Activated B cell treated with CpG ODN at 0.5 μM for 24 hours (primary cell): ENCODE measurements at regions of chr12 and their contacts with region 1.

Region 1: GRCh38 chr12:48995061-48995879 is 3.9 kb downstream of the DDN start:
- DNase-seq: no peak
- ATAC-seq: peak; percentile 23
- H3K4me3 Mint-ChIP-seq: peak overlapping the region; percentile 67
- H3K27ac Mint-ChIP-seq: no peak overlapping the region
- H3K4me1 Mint-ChIP-seq: peaks cover 38% of the 10 kb centered on the region
- H3K27me3 Mint-ChIP-seq: peaks cover 28% of the 10 kb centered on the region
- CTCF ChIP-seq: no peak

Region 2: GRCh38 chr12:48851883-48852733 is 143.2 kb before region 1 on chr12 and contains the start of gene DDX23:
- CTCF ChIA-PET with region 1: interaction called, 4 read pairs
- POLR2A ChIA-PET with region 1: interaction called, 7 read pairs
- intact Hi-C with region 1: loop called (anchors 1 kb)
- DNase-seq: peak; percentile 75
- ATAC-seq: peak; percentile 98
- H3K4me3 Mint-ChIP-seq: peak within 1 kb of the TSS; percentile 98
- H3K27ac Mint-ChIP-seq: peak within 1 kb of the TSS; percentile 93
- H3K4me1 Mint-ChIP-seq: peaks cover 36% of the 10 kb centered on the region
- H3K27me3 Mint-ChIP-seq: no peaks in the 10 kb centered on the region
- CTCF ChIP-seq: no peak
- total RNA-seq, gene DDX23: 116 and 118 TPM in 2 replicates

Region 3: GRCh38 chr12:48977315-48978281 is 17.7 kb before region 1 on chr12:
- CTCF ChIA-PET with region 1: interaction called, 25 read pairs
- POLR2A ChIA-PET with region 1: interaction called, 24 read pairs
- intact Hi-C with region 1: loop called (anchors 1 kb)
- DNase-seq: peak; percentile 79
- ATAC-seq: peak; percentile 72
- H3K4me3 Mint-ChIP-seq: peak overlapping the region; percentile 68
- H3K27ac Mint-ChIP-seq: peak overlapping the region; percentile 64
- H3K4me1 Mint-ChIP-seq: peaks cover 42% of the 10 kb centered on the region
- H3K27me3 Mint-ChIP-seq: peaks cover 50% of the 10 kb centered on the region
- CTCF ChIP-seq: peak; percentile 45

Region 4: DNA sequence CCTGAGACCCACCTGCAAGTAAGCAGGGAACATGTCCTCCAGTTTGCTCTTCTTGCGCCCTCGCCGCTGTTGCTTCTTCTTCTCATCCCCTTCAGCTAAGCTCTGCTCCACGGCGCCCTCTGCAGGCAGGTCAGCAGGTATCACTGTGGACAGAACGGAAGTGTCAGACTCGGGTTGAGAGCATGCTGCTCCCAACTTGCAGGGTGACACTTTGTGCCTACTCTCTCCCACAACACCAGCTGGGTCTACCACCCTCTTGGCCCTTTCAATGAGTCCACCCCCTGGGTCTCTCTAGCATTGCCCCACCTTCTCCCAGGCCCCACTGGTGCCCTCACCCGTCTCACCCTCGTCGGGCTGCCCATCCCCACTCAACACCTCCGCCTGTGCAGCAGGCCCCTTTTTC is 48.6 kb after region 1 on chr12:
- CTCF ChIA-PET with region 1: interaction called, 23 read pairs
- POLR2A ChIA-PET with region 1: no interaction called
- intact Hi-C with region 1: loop called (anchors 2 kb)
- DNase-seq: peak; percentile 63
- ATAC-seq: peak; percentile 81
- H3K4me3 Mint-ChIP-seq: no peak overlapping the region
- H3K27ac Mint-ChIP-seq: no peak overlapping the region
- H3K4me1 Mint-ChIP-seq: no peaks in the 10 kb centered on the region
- H3K27me3 Mint-ChIP-seq: no peaks in the 10 kb centered on the region
- CTCF ChIP-seq: no peak

Region 5: DNA sequence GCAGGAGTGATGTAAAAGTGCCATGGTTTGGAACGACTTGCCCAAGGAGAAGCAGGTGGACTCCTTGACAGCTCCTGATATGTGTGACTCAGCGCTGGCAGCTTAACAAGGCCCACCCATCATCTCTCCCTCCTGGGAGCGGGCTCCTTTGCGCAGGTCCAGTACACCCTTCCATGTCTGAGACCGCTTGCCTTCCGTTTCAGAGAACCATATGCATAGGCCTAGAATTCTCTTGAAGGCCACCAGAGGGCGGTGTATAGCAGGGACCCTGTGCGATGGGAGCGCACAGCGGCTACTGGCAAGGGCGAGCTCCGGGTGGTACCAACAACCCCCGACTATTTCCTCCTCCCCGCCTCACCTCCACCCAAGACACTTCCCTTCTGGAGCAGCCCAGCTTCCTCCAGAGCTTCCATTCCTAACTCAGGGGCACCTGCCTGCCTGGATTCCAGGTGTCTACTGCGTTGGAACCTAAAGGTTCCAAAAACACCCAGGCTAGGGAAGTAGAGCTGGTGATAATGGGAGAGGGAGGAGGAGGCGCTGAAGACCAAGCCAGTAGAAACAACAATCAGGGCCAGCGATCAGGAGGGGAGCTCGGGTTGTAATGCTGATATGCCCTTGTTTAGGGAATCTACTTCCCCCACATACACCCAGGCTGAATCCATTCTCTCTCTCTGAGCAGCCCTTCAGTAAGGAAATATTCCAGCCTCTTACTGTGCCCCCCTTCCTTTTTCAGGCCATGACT is 93.1 kb after region 1 on chr12:
- CTCF ChIA-PET with region 1: interaction called, 14 read pairs
- POLR2A ChIA-PET with region 1: no interaction called
- intact Hi-C with region 1: loop called (anchors 1 kb)
- DNase-seq: peak; percentile 53
- ATAC-seq: peak; percentile 93
- H3K4me3 Mint-ChIP-seq: peak overlapping the region; percentile 64
- H3K27ac Mint-ChIP-seq: no peak overlapping the region
- H3K4me1 Mint-ChIP-seq: peaks cover 42% of the 10 kb centered on the region
- H3K27me3 Mint-ChIP-seq: peaks cover 45% of the 10 kb centered on the region
- CTCF ChIP-seq: peak; percentile 35

Region 6: DNA sequence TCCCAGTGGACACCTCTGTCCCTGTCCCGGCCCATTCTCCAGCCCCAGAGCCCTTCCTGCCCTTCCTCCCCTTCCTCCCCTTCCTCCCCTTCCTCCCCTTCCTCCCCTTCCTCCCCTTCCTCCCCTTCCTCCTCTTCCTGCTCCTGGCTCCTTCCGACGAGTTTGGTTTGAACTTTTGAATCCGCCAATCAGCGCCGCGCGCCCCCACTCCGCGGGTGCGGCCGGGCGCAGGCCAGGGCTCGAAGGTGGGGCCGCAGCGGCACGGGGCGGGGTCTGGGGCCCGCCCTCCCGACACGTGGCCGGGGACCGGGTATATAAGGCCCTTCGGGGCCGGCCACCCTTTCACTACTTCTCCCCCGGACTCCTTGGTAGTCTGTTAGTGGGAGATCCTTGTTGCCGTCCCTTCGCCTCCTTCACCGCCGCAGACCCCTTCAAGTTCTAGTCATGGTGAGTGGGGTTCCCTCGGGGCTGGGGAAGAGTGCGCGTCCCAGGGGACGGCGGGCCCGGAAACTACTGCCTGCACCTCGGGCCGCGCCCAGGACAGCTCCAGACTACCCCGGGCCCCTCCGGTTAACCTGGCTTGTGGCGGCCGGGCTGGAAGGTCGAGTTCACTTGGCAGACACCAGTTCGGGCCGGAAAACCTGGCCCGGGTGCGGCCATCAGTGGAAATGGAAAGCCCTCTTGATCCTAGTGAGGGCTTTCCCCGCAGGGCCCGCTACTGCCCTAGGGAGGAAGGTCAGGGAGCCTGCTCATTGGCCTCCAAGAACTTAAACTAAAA is 269.7 kb after region 1 on chr12 and contains the start of gene TUBA1C:
- CTCF ChIA-PET with region 1: no interaction called
- POLR2A ChIA-PET with region 1: interaction called, 3 read pairs
- intact Hi-C with region 1: loop called (anchors 1 kb)
- DNase-seq: peak; percentile 90
- ATAC-seq: peak; percentile 90
- H3K4me3 Mint-ChIP-seq: peak within 1 kb of the TSS; percentile 94
- H3K27ac Mint-ChIP-seq: peak within 1 kb of the TSS; percentile 92
- H3K4me1 Mint-ChIP-seq: peaks cover 20% of the 10 kb centered on the region
- H3K27me3 Mint-ChIP-seq: no peaks in the 10 kb centered on the region
- CTCF ChIP-seq: no peak
- total RNA-seq, gene TUBA1C: 141 and 142 TPM in 2 replicates